ENCODE measurements at regions of chr12 and their contacts with region 1.

Region 1: GRCh38 chr12:65984227-65984479 is 146.4 kb downstream of the LLPH start:
- DNase-seq: no peak
- H3K4me3 ChIP-seq: no peak overlapping the region
- H3K27ac ChIP-seq: no peak overlapping the region
- H3K4me1 ChIP-seq: no peaks in the 10 kb centered on the region
- H3K27me3 ChIP-seq: no peaks in the 10 kb centered on the region
- CTCF ChIP-seq: no peak
- EP300 ChIP-seq: no peak
- POLR2A ChIP-seq: no peak

Region 2: GRCh38 chr12:65556681-65557437 is 427.3 kb before region 1 on chr12:
- intact Hi-C with region 1: loop called (anchors 5 kb)
- DNase-seq: peak; percentile 81
- H3K4me3 ChIP-seq: no peak overlapping the region
- H3K27ac ChIP-seq: no peak overlapping the region
- H3K4me1 ChIP-seq: no peaks in the 10 kb centered on the region
- H3K27me3 ChIP-seq: peaks cover 0 to 6% (median 0%) of the 10 kb centered on the region in 3 donors
- CTCF ChIP-seq: peak; percentile 62 to 96 (median 78)
- EP300 ChIP-seq: no peak
- POLR2A ChIP-seq: no peak

Region 3: DNA sequence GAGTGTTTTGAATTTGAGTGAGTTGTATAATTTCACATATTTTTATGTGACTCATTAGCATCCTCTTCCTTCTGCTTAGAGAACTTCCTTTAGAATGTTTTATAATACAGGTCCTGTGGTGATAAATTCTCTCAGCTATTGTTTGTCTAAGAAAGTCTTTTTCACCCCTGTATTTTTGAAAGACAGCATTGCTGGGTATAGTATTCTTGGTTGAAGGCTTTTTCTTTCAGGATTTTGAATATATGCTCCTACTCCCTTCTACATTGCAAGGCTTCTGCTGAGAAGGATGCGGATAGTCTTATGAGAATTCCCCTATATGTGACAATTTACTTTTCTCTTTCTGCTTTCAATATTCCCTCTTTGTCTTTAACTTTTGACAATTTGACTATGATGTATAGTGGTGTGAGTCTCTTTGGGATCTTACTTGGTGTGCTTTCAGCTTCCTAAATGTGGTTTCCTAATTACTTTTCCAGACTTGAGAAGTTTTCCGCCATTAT is 278.7 kb before region 1 on chr12:
- intact Hi-C with region 1: no loop called
- DNase-seq: no peak
- H3K4me3 ChIP-seq: no peak overlapping the region
- H3K27ac ChIP-seq: no peak overlapping the region
- H3K4me1 ChIP-seq: no peaks in the 10 kb centered on the region
- H3K27me3 ChIP-seq: no peaks in the 10 kb centered on the region
- CTCF ChIP-seq: no peak
- EP300 ChIP-seq: no peak
- POLR2A ChIP-seq: no peak